WTC11 (cell line): ENCODE measurements at regions of chr3 and their contacts with region 1.

Region 1: GRCh38 chr3:66378256-66378823 is 122.5 kb downstream of the LRIG1 start:
- DNase-seq: peak; percentile 67
- ATAC-seq: peak; percentile 81
- H3K4me3 Mint-ChIP-seq: no peak overlapping the region
- H3K27ac Mint-ChIP-seq: peak overlapping the region; percentile 79
- H3K4me1 Mint-ChIP-seq: peaks cover 15% of the 10 kb centered on the region
- H3K27me3 Mint-ChIP-seq: no peaks in the 10 kb centered on the region
- CTCF ChIP-seq: no peak

Region 2: DNA sequence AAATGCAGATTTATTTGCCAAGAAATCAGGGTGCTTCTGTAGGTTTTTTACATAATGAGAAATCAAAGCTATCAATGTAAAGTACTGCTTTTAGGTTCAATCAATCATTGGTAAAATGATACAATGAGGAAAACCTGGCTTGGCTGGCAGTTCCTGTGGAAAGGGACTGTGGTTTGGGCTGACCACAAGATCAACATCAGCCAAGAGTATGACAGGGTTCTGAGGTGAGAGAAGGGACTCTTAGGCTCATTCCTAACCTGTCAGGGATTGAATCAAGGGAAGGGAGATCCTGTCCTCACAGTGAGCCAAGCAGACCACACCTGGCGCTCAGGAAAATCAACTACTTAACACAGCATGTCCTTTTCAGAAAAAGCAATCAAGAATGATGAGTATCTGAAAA is 450.8 kb before region 1 on chr3:
- CTCF ChIA-PET with region 1: no interaction called
- POLR2A ChIA-PET with region 1: no interaction called
- DNase-seq: no peak
- ATAC-seq: peak; percentile 61
- H3K4me3 Mint-ChIP-seq: no peak overlapping the region
- H3K27ac Mint-ChIP-seq: peak overlapping the region; percentile 72; the same call in 1 of the 2 replicates
- H3K4me1 Mint-ChIP-seq: peaks cover 52% of the 10 kb centered on the region
- H3K27me3 Mint-ChIP-seq: no peaks in the 10 kb centered on the region
- CTCF ChIP-seq: no peak

Region 3: DNA sequence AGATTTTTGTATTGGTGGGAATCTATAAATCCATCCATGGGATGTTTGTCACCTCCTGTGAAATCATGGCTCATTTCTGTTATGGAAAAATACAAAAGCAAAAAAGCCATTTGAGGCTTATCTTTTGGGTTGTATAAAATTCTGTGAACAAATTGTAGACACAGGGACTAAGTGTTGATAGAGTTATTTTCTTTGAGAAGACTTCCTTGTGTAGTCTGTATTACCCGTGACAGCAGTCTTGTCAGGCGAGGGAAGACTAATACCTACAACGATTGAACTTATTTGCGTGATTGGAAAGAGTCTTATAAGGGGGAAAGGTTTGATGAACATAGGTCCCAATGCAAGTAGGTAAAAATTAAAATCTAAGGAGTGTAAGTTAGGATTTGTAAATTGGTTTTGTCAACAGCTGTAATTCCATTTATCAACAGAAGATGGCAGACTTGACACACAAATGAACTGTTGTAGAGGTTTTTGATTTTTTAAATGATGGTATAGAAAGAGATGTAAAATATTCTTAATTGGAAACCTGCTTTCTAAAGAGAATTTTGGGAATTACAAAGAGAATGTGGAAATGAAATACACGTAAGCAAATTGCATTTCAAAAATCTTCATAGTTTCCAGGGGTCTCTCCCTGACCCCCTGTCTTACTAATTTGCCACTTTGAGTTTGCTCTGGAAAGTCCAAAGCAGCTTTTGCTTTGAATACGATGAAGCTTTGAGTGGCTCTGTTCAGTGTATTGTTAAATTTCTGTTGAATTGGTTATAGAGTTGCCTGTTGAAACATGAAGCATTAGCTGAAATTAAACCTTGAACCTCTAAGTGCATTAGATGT is 124.3 kb before region 1 on chr3:
- CTCF ChIA-PET with region 1: interaction called, 39 read pairs
- POLR2A ChIA-PET with region 1: no interaction called
- DNase-seq: no peak
- ATAC-seq: no peak
- H3K4me3 Mint-ChIP-seq: no peak overlapping the region
- H3K27ac Mint-ChIP-seq: no peak overlapping the region
- H3K4me1 Mint-ChIP-seq: no peaks in the 10 kb centered on the region
- H3K27me3 Mint-ChIP-seq: no peaks in the 10 kb centered on the region
- CTCF ChIP-seq: peak; percentile 78

Region 4: GRCh38 chr3:66398246-66399034 is 20.1 kb after region 1 on chr3:
- CTCF ChIA-PET with region 1: interaction called, 13 read pairs
- POLR2A ChIA-PET with region 1: no interaction called
- DNase-seq: no peak
- ATAC-seq: no peak
- H3K4me3 Mint-ChIP-seq: no peak overlapping the region
- H3K27ac Mint-ChIP-seq: peak overlapping the region; percentile 44
- H3K4me1 Mint-ChIP-seq: peaks cover 41% of the 10 kb centered on the region
- H3K27me3 Mint-ChIP-seq: no peaks in the 10 kb centered on the region
- CTCF ChIP-seq: no peak

Region 5: GRCh38 chr3:66456711-66457173 is 78.4 kb after region 1 on chr3:
- CTCF ChIA-PET with region 1: no interaction called
- POLR2A ChIA-PET with region 1: no interaction called
- DNase-seq: no peak
- ATAC-seq: no peak
- H3K4me3 Mint-ChIP-seq: no peak overlapping the region
- H3K27ac Mint-ChIP-seq: no peak overlapping the region
- H3K4me1 Mint-ChIP-seq: peaks cover 45% of the 10 kb centered on the region
- H3K27me3 Mint-ChIP-seq: no peaks in the 10 kb centered on the region
- CTCF ChIP-seq: no peak

Region 6: DNA sequence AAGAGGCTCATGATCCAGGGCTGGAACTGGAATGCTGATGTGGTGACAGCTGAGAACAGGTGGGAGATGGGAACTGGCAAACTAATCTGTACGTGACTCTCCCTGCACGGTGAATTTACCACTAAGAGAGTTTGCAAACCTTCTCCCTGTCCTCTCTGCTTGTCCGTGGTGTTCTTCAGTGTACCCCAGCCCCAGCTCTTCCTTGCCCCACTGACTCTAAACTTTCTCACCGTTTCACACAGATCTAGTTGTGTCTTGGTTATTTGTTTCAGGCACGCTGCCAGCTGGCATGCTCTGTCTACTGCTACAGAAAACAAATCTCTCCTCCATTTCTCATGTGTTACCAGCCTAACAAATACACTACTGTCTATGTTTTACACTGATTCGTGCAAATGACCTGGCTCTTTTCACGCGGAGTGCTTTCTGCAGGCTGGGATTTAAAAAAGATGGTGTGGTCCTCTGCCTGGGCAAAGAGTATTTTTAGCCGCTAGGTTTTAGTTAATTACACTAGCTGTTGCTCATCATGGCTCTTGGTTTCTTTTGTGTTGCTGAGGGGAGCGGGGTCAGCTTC is 315.2 kb after region 1 on chr3:
- CTCF ChIA-PET with region 1: no interaction called
- POLR2A ChIA-PET with region 1: no interaction called
- DNase-seq: no peak
- ATAC-seq: no peak
- H3K4me3 Mint-ChIP-seq: no peak overlapping the region
- H3K27ac Mint-ChIP-seq: no peak overlapping the region; the same call in 1 of the 2 replicates
- H3K4me1 Mint-ChIP-seq: peaks cover 6% of the 10 kb centered on the region
- H3K27me3 Mint-ChIP-seq: peaks cover 2% of the 10 kb centered on the region
- CTCF ChIP-seq: no peak